B cell (primary cell): ENCODE measurements at regions of chr6 and their contacts with region 1.

Region 1: GRCh38 chr6:170306324-170307079 is at the start of gene FAM120B:
- DNase-seq: peak; percentile 98
- ATAC-seq: peak; percentile 96
- H3K4me3 ChIP-seq: peak within 1 kb of the TSS; percentile 45 to 95 (median 86)
- H3K4me3 Mint-ChIP-seq: peak within 1 kb of the TSS; percentile 98
- H3K27ac ChIP-seq: peak within 1 kb of the TSS; percentile 72 to 90
- H3K27ac Mint-ChIP-seq: peak within 1 kb of the TSS; percentile 97
- H3K4me1 ChIP-seq: peaks cover 22 to 34% of the 10 kb centered on the region in 2 donors
- H3K4me1 Mint-ChIP-seq: peaks cover 49% of the 10 kb centered on the region
- H3K27me3 ChIP-seq: peaks cover 0 to 4% (median 1%) of the 10 kb centered on the region in 4 experiments
- H3K27me3 Mint-ChIP-seq: peaks cover 26% of the 10 kb centered on the region
- CTCF ChIP-seq: no peak
- total RNA-seq, gene FAM120B: 51.7 and 53.2 TPM in 2 replicates

Region 2: DNA sequence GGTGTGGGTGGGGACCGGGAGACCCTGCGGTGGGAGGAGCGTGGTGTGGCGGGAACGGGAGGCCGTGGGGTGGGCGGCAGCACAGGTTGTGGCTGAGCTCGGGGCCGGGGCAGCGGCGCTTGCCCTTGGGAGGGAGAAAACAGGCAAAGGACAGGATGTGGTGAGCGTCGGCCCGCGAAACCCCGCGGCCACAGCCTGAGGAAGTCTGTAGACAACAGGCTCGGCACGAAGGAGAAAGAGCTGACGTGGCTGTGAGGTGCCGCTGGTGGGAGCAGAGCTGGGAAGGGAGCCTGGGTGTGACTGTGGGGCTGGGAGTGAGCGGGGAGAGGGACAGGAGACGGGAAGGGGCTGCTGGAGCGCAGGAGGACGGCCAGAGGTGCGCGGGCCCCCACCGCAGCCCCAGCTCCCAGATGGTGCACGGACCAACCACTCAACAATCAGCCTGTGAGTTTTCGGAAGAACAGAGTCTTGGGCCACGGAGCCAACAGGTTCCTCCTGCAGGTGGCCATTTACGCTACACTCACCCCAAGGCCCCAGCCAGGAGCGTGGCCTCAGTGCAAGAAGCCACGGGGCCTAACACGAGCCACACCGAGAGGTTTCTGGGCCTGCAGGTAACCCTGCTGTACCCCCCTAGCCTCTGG is 218.4 kb before region 1 on chr6:
- CTCF ChIA-PET with region 1: no interaction called
- POLR2A ChIA-PET with region 1: no interaction called
- intact Hi-C with region 1: loop called (anchors 1 kb)
- DNase-seq: peak; percentile 78
- ATAC-seq: peak; percentile 55
- H3K4me3 ChIP-seq: peak overlapping the region in 4 of 5 experiments; percentile 55 to 75 (median 62)
- H3K4me3 Mint-ChIP-seq: peak overlapping the region; percentile 89
- H3K27ac ChIP-seq: peak overlapping the region; percentile 75 to 80
- H3K27ac Mint-ChIP-seq: peak overlapping the region; percentile 94
- H3K4me1 ChIP-seq: peaks cover 26 to 29% of the 10 kb centered on the region in 2 donors
- H3K4me1 Mint-ChIP-seq: peaks cover 33% of the 10 kb centered on the region
- H3K27me3 ChIP-seq: no peaks in the 10 kb centered on the region
- H3K27me3 Mint-ChIP-seq: no peaks in the 10 kb centered on the region
- CTCF ChIP-seq: no peak

Region 3: GRCh38 chr6:170271771-170272314 is 34.7 kb before region 1 on chr6:
- CTCF ChIA-PET with region 1: no interaction called
- POLR2A ChIA-PET with region 1: no interaction called
- intact Hi-C with region 1: loop called (anchors 1 kb)
- DNase-seq: peak; percentile 86
- ATAC-seq: peak; percentile 87
- H3K4me3 ChIP-seq: peak overlapping the region; percentile 45 to 64 (median 60)
- H3K4me3 Mint-ChIP-seq: peak overlapping the region; percentile 93
- H3K27ac ChIP-seq: peak overlapping the region; percentile 57 to 66
- H3K27ac Mint-ChIP-seq: peak overlapping the region; percentile 86
- H3K4me1 ChIP-seq: peaks cover 12 to 20% of the 10 kb centered on the region in 2 donors
- H3K4me1 Mint-ChIP-seq: peaks cover 22% of the 10 kb centered on the region
- H3K27me3 ChIP-seq: no peaks in the 10 kb centered on the region
- H3K27me3 Mint-ChIP-seq: no peaks in the 10 kb centered on the region
- CTCF ChIP-seq: no peak

Region 4: DNA sequence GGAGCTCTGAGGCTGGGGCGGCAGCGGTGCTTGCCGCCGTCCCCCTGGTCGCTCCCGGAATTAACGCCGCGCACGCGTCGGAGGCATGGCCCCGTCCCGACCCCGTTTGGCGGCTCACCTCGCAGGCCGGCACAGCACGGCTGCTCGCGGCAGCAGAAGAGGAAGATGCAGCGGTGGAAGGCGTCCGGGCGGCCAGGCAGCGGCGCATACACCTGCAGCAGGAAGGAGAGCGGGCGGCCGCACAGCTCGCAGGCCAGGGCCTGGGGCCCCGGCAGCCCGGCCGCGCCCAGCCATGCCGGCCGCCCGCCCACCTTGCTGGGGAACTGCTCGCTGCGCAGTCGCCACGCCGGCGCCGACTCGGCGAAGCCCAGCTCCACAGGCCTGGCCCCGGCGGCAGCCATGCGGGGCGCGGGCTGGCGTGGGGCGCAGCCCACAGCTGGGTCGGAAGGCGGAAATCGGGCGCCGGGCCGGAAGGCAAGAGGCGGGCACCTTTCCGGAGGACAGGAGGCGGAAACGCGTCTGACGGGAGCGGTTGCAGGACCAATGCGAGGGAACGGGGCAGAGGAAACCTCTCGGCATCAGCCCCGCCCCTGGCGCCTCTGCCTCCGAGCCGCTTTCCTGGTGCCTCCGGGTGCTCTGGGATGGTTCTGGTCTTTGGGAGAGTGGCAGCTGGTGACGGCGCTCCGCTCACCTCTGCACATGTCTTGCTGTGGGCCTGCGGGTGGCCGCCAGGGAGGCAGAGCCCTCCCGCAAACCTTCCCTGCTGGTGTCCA is 277.9 kb after region 1 on chr6 and contains the start of gene PDCD2:
- CTCF ChIA-PET with region 1: no interaction called
- POLR2A ChIA-PET with region 1: no interaction called
- intact Hi-C with region 1: loop called (anchors 2 kb)
- DNase-seq: peak; percentile 93
- ATAC-seq: peak; percentile 93
- H3K4me3 ChIP-seq: peak within 1 kb of the TSS; percentile 76 to 85 (median 82)
- H3K4me3 Mint-ChIP-seq: peak within 1 kb of the TSS; percentile 98
- H3K27ac ChIP-seq: peak within 1 kb of the TSS; percentile 82 to 86
- H3K27ac Mint-ChIP-seq: peak within 1 kb of the TSS; percentile 96
- H3K4me1 ChIP-seq: peaks cover 14 to 16% of the 10 kb centered on the region in 2 donors
- H3K4me1 Mint-ChIP-seq: peaks cover 25% of the 10 kb centered on the region
- H3K27me3 ChIP-seq: peaks cover 0 to 7% (median 0%) of the 10 kb centered on the region in 4 experiments
- H3K27me3 Mint-ChIP-seq: no peaks in the 10 kb centered on the region
- CTCF ChIP-seq: no peak
- total RNA-seq, gene PDCD2: 64.5 and 71.0 TPM in 2 replicates